ENCODE measurements at regions of chr17 and their contacts with region 1.

Region 1: GRCh38 chr17:10646392-10646990 is 10.6 kb downstream of the MYH3 start:
- DNase-seq: peak; percentile 79
- H3K4me3 Mint-ChIP-seq: no peak overlapping the region
- H3K27ac Mint-ChIP-seq: no peak overlapping the region
- H3K4me1 Mint-ChIP-seq: no peaks in the 10 kb centered on the region
- H3K27me3 Mint-ChIP-seq: no peaks in the 10 kb centered on the region

Region 2: DNA sequence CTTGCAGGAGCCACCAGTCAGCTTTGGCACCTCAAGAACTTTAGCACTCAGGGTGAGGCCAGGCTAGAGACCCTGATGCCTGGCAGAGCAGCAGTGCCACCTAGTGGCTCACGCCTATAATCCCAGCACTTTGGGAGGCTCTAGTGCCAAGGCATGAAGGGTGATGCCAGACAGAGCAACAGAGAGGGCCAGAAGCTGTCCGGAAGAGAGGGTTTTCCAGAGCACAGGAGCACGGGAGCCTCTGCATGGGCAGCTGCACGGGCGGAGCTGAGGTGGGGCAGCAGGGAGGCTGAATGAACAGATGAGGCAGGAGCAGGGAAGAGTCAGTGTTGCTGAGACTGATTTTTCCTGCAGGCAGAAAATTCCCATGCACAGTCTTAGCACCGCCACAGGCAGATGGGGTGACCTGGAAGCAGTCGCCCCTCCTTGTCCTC is 28.3 kb before region 1 on chr17:
- CTCF ChIA-PET with region 1: interaction called, 26 read pairs
- POLR2A ChIA-PET with region 1: no interaction called
- intact Hi-C with region 1: no loop called
- DNase-seq: peak; percentile 70
- H3K4me3 Mint-ChIP-seq: no peak overlapping the region
- H3K27ac Mint-ChIP-seq: no peak overlapping the region
- H3K4me1 Mint-ChIP-seq: no peaks in the 10 kb centered on the region
- H3K27me3 Mint-ChIP-seq: peaks cover 3% of the 10 kb centered on the region

Region 3: DNA sequence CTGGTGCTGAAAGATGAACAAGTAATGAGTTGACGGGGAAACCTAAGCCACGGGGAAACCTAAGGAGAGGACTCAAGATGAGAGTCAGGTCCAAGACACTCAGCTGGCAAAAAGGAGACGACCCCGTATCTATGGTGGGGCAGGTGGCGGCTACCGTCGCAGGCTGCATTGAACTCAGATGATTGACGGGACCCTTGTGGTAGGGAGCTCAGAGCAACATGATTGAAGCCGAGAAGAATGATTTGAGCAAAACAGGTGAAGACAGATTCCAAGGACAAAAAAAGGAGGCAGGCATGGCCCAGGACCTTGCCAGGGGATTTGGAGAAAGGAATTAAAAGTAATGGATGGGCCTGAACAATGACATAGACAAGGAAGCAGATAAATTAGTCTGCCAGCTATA is 18.1 kb after region 1 on chr17:
- CTCF ChIA-PET with region 1: interaction called, 11 read pairs
- POLR2A ChIA-PET with region 1: no interaction called
- intact Hi-C with region 1: no loop called
- DNase-seq: no peak
- H3K4me3 Mint-ChIP-seq: no peak overlapping the region
- H3K27ac Mint-ChIP-seq: no peak overlapping the region
- H3K4me1 Mint-ChIP-seq: no peaks in the 10 kb centered on the region
- H3K27me3 Mint-ChIP-seq: no peaks in the 10 kb centered on the region

Region 4: DNA sequence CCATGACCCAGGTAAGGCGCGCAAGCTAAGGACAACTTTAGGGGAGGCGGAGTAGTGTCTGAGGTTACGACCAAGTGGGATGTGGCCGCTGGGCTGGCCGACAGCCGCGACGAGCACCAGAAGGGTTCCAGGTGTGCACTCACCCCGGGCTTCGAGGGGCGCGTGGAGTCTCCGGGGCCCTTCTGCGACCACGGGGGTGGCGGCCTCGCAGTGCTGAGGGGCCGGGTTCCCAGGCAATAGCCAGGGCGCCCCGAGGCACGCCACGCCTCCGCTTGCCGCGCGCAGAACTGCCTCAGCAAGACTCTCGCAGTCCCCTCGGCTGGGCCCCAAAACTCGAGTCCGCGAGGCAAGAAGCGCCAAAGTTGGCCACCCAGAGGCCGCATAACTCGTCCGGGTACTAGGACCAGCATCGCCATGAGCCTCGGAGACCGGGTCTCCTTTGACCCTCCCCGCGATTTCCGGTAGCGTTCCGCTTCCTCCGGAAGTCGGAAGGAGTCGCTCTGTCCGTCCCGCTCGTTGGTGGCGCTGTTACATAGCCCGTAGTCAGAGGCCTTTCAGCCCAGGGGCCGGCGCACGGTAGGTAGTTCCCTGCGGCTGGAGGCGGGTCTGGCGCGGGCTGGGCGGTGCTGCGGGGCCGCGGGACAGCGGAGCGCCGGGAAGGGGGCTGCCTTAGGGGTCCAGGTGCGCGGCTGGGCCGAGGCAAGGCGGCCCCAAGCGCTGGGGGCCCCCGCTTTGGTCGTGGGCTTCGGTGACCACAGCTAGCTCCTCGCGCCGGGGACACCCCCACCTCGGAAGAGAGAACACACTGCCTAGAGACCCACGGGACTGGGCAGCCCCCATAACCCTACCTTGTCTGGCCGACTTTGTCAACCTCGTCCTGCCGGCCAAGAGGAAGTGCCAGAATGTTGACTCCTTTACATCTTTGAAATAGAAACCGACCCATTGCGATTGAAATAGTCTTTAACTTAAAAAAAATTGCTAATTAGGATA is 50.9 kb after region 1 on chr17 and contains the starts of genes ADPRM and SCO1:
- CTCF ChIA-PET with region 1: interaction called, 7 read pairs
- POLR2A ChIA-PET with region 1: no interaction called
- intact Hi-C with region 1: loop called (anchors 5 kb)
- DNase-seq: peak; percentile 94
- H3K4me3 Mint-ChIP-seq: peak within 1 kb of the TSS; percentile 92
- H3K27ac Mint-ChIP-seq: peak within 1 kb of the TSS; percentile 93
- H3K4me1 Mint-ChIP-seq: peaks cover 52% of the 10 kb centered on the region
- H3K27me3 Mint-ChIP-seq: no peaks in the 10 kb centered on the region
- total RNA-seq, gene ADPRM: 12.4 to 13.5 TPM
- total RNA-seq, gene SCO1: 34.6 to 36.4 TPM

Region 5: DNA sequence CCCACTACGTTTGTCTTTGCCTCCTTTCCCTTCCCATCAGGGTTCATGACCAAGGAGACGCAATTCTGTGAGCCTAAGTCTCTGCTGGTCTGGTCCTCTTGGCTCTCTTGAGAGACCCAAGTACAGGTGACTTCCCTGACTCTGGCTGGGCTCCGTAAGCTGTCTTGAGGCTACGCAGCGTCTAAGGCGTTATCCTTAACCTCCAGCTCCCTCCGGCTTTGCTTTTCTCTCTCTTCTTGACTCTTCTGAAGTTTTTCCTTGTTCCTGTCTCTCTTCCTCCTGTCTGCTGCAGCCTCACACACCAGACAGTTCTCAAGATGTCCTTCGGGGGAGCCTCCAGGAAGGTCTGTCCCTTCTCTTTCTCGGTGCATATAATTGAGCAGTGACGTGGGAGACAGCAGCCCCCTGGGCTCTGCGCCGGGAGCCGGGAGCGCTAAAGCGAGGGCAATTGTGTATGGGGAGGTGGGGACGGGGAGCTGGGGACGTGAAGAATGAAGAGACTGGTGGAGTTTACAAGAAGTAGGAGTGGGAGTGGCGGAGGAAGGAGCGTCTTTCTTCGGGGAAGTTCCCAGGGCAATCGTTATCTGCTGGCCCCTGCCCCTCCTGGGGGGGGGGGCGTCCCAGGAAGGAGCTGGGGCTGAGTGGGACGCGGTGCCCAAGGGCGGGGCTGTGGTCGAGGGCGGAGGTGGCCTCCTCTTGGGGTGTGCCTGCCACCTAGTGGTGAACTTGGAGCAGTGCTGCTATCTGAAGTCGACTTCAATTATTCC is 198.3 kb after region 1 on chr17:
- CTCF ChIA-PET with region 1: interaction called, 68 read pairs
- POLR2A ChIA-PET with region 1: no interaction called
- intact Hi-C with region 1: loop called (anchors 1 kb)
- DNase-seq: peak; percentile 79
- H3K4me3 Mint-ChIP-seq: peak overlapping the region; percentile 73
- H3K27ac Mint-ChIP-seq: no peak overlapping the region
- H3K4me1 Mint-ChIP-seq: peaks cover 7% of the 10 kb centered on the region
- H3K27me3 Mint-ChIP-seq: peaks cover 8% of the 10 kb centered on the region